Activated B cell treated with CpG ODN at 0.5 μM for 24 hours (primary cell): ENCODE measurements at regions of chr14 and their contacts with region 1.

Region 1: GRCh38 chr14:23953464-23954278 is at the start of gene DHRS4:
- DNase-seq: peak; percentile 69
- ATAC-seq: peak; percentile 95
- H3K4me3 Mint-ChIP-seq: peak within 1 kb of the TSS; percentile 97
- H3K27ac Mint-ChIP-seq: peak within 1 kb of the TSS; percentile 88
- H3K4me1 Mint-ChIP-seq: peaks cover 28% of the 10 kb centered on the region
- H3K27me3 Mint-ChIP-seq: no peaks in the 10 kb centered on the region
- CTCF ChIP-seq: peak; percentile 62
- total RNA-seq, gene DHRS4: 15.8 and 16.1 TPM in 2 replicates

Region 2: GRCh38 chr14:23588884-23589598 is 364.6 kb before region 1 on chr14:
- CTCF ChIA-PET with region 1: interaction called, 3 read pairs
- POLR2A ChIA-PET with region 1: interaction called, 4 read pairs
- intact Hi-C with region 1: loop called (anchors 1 kb)
- DNase-seq: peak; percentile 63
- ATAC-seq: peak; percentile 99
- H3K4me3 Mint-ChIP-seq: no peak overlapping the region
- H3K27ac Mint-ChIP-seq: no peak overlapping the region
- H3K4me1 Mint-ChIP-seq: peaks cover 5% of the 10 kb centered on the region
- H3K27me3 Mint-ChIP-seq: peaks cover 18% of the 10 kb centered on the region
- CTCF ChIP-seq: no peak

Region 3: DNA sequence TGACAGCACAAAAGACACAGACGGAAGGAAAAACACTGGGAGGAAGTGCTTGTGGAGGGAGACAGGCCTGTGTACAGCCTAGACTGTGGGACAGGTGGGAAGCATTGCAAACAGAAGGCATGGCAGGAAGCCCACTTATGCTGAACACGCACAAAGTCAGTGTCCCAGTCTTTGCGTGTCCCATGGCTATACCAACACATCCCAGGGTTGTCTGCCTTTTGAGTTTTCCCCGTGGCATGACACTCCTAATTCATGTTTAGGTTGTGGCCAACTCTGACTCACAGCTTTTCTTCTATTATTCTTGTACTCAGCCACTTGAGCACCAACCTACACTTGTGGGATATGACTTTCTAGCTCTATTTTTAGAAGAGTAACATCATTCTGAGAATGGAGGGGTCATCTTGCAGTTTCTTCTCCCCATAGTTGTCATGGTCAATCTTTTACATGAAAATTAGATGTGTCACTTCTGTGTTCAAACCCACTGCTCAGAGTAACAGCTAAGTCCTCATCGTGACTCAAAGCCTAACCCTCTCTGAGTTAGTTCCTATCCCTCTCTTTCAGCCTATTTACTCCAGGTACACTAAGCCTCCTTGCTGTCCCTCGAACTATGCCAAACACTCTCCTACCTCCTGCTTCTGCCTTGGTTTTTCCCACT is 347.6 kb before region 1 on chr14:
- CTCF ChIA-PET with region 1: no interaction called
- POLR2A ChIA-PET with region 1: no interaction called
- intact Hi-C with region 1: no loop called
- DNase-seq: no peak
- ATAC-seq: no peak
- H3K4me3 Mint-ChIP-seq: no peak overlapping the region
- H3K27ac Mint-ChIP-seq: no peak overlapping the region
- H3K4me1 Mint-ChIP-seq: no peaks in the 10 kb centered on the region
- H3K27me3 Mint-ChIP-seq: peaks cover 7% of the 10 kb centered on the region
- CTCF ChIP-seq: no peak

Region 4: GRCh38 chr14:23631702-23632460 is 321.8 kb before region 1 on chr14:
- CTCF ChIA-PET with region 1: interaction called, 3 read pairs
- POLR2A ChIA-PET with region 1: no interaction called
- intact Hi-C with region 1: loop called (anchors 1 kb)
- DNase-seq: peak; percentile 47
- ATAC-seq: peak; percentile 52
- H3K4me3 Mint-ChIP-seq: no peak overlapping the region
- H3K27ac Mint-ChIP-seq: no peak overlapping the region
- H3K4me1 Mint-ChIP-seq: peaks cover 4% of the 10 kb centered on the region
- H3K27me3 Mint-ChIP-seq: peaks cover 9% of the 10 kb centered on the region
- CTCF ChIP-seq: peak; percentile 92

Region 5: DNA sequence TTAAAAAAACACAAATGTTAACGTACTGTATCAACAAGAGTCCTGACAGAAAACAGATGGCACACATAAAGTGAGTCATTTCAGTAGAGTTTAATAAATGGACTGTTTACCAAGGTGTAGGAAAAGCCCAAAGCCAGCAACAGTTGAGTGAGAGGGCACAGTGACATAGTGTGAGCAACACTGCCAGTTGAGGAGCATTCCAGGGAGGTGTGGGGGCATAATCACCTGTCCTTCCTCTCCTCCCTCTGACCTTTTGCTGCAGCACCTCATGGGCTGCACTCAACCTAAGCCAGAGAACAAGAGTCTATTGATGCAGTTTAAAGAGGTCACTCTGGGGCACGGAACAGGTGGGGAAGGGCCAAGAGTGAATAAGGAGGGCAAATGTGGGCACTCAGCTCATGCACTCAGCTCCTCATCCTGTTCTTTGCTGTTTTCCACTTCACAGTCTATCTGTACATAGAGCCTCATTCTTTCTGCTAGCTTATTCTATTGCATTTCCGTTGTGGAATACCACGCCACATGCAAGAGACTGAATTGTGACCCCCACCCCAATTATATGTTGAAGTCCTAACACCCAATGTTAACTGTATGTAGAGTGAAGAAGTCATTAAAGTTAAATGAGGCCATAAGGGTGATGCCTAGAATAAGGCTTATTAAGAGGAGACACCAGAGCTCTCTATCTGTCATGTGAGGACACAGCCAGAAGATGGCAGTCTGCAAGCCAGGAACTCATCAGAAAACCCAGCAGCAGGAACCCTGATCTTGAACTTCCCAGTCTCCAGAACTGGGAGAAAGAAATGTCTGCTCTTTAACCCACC is 288.1 kb before region 1 on chr14:
- CTCF ChIA-PET with region 1: no interaction called
- POLR2A ChIA-PET with region 1: no interaction called
- intact Hi-C with region 1: loop called (anchors 1 kb)
- DNase-seq: no peak
- ATAC-seq: no peak
- H3K4me3 Mint-ChIP-seq: no peak overlapping the region
- H3K27ac Mint-ChIP-seq: no peak overlapping the region
- H3K4me1 Mint-ChIP-seq: no peaks in the 10 kb centered on the region
- H3K27me3 Mint-ChIP-seq: peaks cover 3% of the 10 kb centered on the region
- CTCF ChIP-seq: no peak

Region 6: DNA sequence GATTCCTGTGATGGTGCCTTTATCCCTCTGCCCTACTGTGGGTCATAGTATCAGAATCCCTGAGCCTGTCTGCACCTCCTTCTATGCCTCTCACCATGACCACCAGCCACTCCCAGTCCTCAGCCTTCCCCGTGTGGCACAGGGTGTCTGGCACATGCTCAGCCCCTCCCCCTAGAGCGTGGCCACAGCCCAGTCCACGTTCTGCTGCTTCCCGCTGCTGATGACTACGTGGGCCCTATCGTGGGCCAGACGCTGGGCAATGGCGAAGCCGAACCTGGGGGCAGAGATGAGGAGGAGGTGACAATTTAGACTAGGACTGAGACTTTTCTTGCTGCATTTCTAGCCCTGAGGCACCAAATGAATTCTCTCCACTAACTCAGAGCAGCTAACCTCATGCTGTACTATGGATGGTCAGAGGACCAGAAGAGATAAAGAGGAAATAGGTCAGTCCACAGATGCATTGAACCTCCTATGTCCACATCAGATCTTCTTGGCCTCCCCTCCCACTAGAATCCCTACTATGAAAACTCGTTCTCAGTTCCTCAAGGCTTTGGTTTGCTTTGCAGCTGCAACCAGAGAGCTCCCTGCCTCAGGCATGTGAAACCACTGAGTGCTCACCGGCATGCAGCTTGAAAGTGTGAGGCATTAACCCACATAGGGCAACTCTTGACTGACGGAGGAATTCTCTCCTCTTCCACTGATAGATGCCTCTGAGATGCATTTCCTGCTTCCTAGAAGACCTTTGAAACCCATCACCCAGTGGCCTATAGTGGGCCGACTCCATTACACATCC is 126.4 kb before region 1 on chr14:
- CTCF ChIA-PET with region 1: no interaction called
- POLR2A ChIA-PET with region 1: no interaction called
- intact Hi-C with region 1: no loop called
- DNase-seq: no peak
- ATAC-seq: no peak
- H3K4me3 Mint-ChIP-seq: no peak overlapping the region
- H3K27ac Mint-ChIP-seq: no peak overlapping the region
- H3K4me1 Mint-ChIP-seq: no peaks in the 10 kb centered on the region
- H3K27me3 Mint-ChIP-seq: peaks cover 9% of the 10 kb centered on the region
- CTCF ChIP-seq: no peak

Region 7: GRCh38 chr14:23929822-23930294 is 23.8 kb before region 1 on chr14:
- CTCF ChIA-PET with region 1: no interaction called
- POLR2A ChIA-PET with region 1: interaction called, 3 read pairs
- intact Hi-C with region 1: loop called (anchors 1 kb)
- DNase-seq: peak; percentile 60
- ATAC-seq: peak; percentile 92
- H3K4me3 Mint-ChIP-seq: no peak overlapping the region
- H3K27ac Mint-ChIP-seq: no peak overlapping the region
- H3K4me1 Mint-ChIP-seq: no peaks in the 10 kb centered on the region
- H3K27me3 Mint-ChIP-seq: peaks cover 8% of the 10 kb centered on the region
- CTCF ChIP-seq: no peak

Region 8: GRCh38 chr14:24141097-24141880 is 187.6 kb after region 1 on chr14 and contains the start of gene EMC9:
- CTCF ChIA-PET with region 1: no interaction called
- POLR2A ChIA-PET with region 1: no interaction called
- intact Hi-C with region 1: no loop called
- DNase-seq: peak; percentile 92
- ATAC-seq: peak; percentile 90
- H3K4me3 Mint-ChIP-seq: peak within 1 kb of the TSS; percentile 83
- H3K27ac Mint-ChIP-seq: peak within 1 kb of the TSS; percentile 87
- H3K4me1 Mint-ChIP-seq: peaks cover 78% of the 10 kb centered on the region
- H3K27me3 Mint-ChIP-seq: no peaks in the 10 kb centered on the region
- CTCF ChIP-seq: no peak
- total RNA-seq, gene EMC9: 22.5 and 22.6 TPM in 2 replicates

Region 9: GRCh38 chr14:24442273-24443052 is 488.8 kb after region 1 on chr14 and contains the start of gene SDR39U1:
- CTCF ChIA-PET with region 1: no interaction called
- POLR2A ChIA-PET with region 1: no interaction called
- intact Hi-C with region 1: loop called (anchors 10 kb)
- DNase-seq: peak; percentile 81
- ATAC-seq: peak; percentile 89
- H3K4me3 Mint-ChIP-seq: peak within 1 kb of the TSS; percentile 98
- H3K27ac Mint-ChIP-seq: peak within 1 kb of the TSS; percentile 98
- H3K4me1 Mint-ChIP-seq: peaks cover 48% of the 10 kb centered on the region
- H3K27me3 Mint-ChIP-seq: no peaks in the 10 kb centered on the region
- CTCF ChIP-seq: no peak
- total RNA-seq, gene SDR39U1: 70.6 and 80.0 TPM in 2 replicates